Heart right ventricle (tissue), 16 donors: ENCODE measurements at regions of chr9 and their contacts with region 1.

Region 1: DNA sequence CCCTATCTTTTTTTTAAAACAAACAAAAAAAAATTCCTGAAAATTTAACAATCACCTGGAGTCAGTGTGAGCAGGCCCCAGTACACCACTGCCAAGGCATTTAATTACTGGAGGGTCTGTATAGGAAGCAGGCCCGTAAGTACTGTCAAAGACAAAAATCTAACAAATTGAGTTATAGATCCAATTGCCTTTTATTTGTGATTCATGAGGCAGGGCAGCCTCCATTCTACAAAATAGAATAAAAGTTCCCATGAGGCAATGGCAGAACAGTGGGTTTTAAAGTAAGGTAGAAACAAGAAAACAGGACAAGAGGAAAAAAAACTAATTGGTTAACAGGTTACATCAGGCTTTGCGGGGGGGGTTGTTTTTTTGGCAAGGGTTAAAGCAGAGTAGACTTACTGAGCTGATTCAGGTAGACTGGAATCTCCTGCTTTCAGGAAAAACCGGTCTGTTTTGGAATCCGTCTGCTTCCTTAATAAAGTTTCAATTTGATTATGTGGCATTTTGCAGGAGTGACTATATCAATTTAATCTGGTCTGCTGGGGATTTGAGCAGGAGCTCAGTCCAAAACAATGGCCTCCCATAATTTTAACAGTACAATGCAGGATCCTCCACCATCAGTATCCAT is 48.9 kb downstream of the AUH start:
- DNase-seq: no peak
- ATAC-seq: no peak
- H3K4me3 ChIP-seq: no peak overlapping the region
- H3K27ac ChIP-seq: no peak overlapping the region
- H3K4me1 ChIP-seq: no peaks in the 10 kb centered on the region
- H3K27me3 ChIP-seq: no peaks in the 10 kb centered on the region
- CTCF ChIP-seq: no peak

Region 2: DNA sequence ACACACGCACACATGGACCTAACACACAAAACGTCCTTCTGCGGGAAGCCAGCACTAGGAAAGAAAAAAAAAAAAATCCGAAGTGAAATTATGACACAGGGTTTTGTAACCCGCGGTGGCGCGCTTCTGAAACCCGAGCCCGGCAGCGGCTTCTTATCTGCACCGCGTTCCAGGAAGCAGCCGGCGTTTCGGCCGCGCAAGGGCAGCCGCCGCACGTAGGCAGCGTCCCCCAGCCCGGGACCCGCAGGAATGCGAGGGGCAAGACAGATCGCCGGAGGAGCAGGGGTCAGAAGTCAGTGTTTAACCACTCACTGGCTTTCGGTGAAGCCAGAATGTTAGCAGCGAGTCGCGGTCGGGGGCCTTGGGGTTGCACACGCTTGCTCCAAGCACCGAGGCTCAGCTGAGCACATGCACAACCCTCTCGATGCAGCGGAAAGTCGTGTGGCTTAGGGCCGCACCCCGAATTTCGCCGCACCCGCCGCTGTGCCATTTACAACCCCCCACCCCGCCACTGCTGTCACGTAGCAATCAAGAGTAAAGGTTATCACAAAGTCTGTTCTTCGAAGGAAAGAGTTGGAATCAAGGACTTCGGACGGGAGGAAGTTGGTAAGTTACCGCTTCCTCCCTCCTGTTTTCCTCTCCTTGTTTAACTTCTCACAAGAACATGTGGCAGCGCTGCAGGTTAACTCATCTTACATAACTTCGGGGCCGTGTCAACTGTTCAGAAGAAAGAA is 119.0 kb before region 1 on chr9:
- intact Hi-C with region 1: no loop called
- DNase-seq: peak; percentile 83 to 85
- ATAC-seq: peak; percentile 57 to 84 (median 74)
- H3K4me3 ChIP-seq: peak overlapping the region in 9 of 10 donors; percentile 28 to 60 (median 53)
- H3K27ac ChIP-seq: peak overlapping the region; percentile 90 to 100 (median 98)
- H3K4me1 ChIP-seq: peaks cover 0 to 72% (median 48%) of the 10 kb centered on the region in 9 donors
- H3K27me3 ChIP-seq: no peaks in the 10 kb centered on the region
- CTCF ChIP-seq: peak in 1 of 9 donors; percentile 29

Region 3: GRCh38 chr9:91374939-91375338 is 62.1 kb after region 1 on chr9:
- intact Hi-C with region 1: loop called in 1 of 10 experiments (anchors 10 kb)
- DNase-seq: no peak
- ATAC-seq: no peak
- H3K4me3 ChIP-seq: no peak overlapping the region
- H3K27ac ChIP-seq: no peak overlapping the region
- H3K4me1 ChIP-seq: peaks cover 0 to 18% (median 0%) of the 10 kb centered on the region in 9 donors
- H3K27me3 ChIP-seq: no peaks in the 10 kb centered on the region
- CTCF ChIP-seq: no peak

Region 4: GRCh38 chr9:92265159-92265558 is 952.3 kb after region 1 on chr9:
- intact Hi-C with region 1: no loop called
- DNase-seq: no peak
- ATAC-seq: no peak
- H3K4me3 ChIP-seq: no peak overlapping the region
- H3K27ac ChIP-seq: no peak overlapping the region
- H3K4me1 ChIP-seq: peaks cover 0 to 4% (median 0%) of the 10 kb centered on the region in 9 donors
- H3K27me3 ChIP-seq: no peaks in the 10 kb centered on the region
- CTCF ChIP-seq: no peak